ENCODE measurements at regions of chr4 and their contacts with region 1.

Region 1: DNA sequence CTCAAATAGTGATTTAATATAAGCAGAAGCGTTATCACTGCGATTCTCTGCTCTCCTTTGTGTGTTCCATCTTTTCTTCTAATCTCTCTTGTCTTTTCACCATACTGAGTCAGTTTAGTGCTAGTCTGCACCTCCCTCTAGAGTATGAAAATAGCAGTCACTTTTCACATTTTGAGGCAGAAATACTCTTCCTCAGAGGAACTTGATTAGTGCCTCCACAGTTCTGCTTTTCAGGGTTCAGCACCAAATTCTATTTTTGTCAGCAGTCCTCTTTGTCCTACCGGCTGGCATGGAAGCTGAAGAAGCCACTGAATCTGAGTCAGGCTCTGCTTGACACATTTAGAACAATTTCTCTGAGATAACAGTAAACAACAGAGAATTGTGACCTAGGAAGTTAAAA is 49.7 kb upstream of the ANKRD17 start:
- DNase-seq: no peak
- ATAC-seq: no peak
- H3K4me3 ChIP-seq: no peak overlapping the region
- H3K27ac ChIP-seq: no peak overlapping the region
- H3K4me1 ChIP-seq: no peaks in the 10 kb centered on the region
- H3K27me3 ChIP-seq: no peaks in the 10 kb centered on the region
- CTCF ChIP-seq: peak in 1 of 5 experiments; percentile 7
- POLR2A ChIP-seq: no peak

Region 2: DNA sequence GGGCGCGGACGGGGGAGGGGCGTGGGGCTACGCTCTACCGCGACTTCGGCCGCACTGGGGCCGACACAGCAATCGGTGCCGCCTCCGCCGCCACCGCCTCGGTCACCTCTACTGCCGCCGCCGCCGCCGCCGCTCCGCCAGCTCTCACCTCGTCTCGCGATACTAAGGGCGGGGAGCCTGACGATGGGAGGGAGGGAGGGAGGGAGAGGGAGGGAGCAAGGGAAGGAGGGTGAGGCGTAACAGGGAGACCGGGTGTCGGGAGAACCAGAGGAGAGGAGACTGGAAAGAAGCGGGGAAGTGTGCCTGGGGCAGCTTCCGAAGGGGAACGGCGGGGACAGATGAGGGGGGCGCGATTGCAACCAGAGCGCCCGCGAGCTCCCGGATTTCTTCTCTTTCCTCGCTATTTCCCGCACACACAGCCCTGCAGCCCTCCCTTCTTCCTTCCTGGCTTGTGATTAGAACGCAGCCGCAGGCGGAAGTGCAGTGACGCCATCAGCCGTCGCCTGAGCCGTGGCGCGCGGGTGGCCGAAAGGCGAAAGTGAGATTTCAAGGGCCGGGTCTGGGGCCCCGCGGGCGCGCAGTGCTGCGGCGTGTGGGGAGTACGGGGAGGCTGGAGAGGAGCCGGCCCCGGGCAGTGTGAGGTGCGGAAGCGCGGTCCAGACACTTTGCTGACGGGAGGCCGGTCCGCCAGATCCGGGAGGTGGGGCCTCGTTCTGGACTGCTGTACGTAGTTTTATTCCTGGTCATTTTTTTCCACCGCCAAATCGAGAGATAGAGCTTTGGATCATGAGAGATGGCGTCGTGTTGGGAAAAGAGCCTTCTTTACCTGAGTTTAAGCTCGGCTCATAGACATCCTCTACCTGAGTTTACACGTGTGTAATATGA is 49.4 kb before region 1 on chr4 and contains the start of gene ANKRD17:
- in situ Hi-C with region 1: no loop called
- intact Hi-C with region 1: no loop called
- DNase-seq: peak; percentile 83 to 90
- ATAC-seq: peak; percentile 82 to 87
- H3K4me3 ChIP-seq: peak within 1 kb of the TSS; percentile 80 to 93 (median 90)
- H3K27ac ChIP-seq: peak within 1 kb of the TSS; percentile 92 to 98 (median 96)
- H3K4me1 ChIP-seq: peaks cover 42 to 51% of the 10 kb centered on the region in 2 donors
- H3K27me3 ChIP-seq: no peaks in the 10 kb centered on the region
- CTCF ChIP-seq: peak; percentile 24 to 54 (median 27)
- POLR2A ChIP-seq: peak; percentile 76 to 77
- total RNA-seq, gene ANKRD17: 40.8 to 68.5 (median 54.8) TPM

Region 3: DNA sequence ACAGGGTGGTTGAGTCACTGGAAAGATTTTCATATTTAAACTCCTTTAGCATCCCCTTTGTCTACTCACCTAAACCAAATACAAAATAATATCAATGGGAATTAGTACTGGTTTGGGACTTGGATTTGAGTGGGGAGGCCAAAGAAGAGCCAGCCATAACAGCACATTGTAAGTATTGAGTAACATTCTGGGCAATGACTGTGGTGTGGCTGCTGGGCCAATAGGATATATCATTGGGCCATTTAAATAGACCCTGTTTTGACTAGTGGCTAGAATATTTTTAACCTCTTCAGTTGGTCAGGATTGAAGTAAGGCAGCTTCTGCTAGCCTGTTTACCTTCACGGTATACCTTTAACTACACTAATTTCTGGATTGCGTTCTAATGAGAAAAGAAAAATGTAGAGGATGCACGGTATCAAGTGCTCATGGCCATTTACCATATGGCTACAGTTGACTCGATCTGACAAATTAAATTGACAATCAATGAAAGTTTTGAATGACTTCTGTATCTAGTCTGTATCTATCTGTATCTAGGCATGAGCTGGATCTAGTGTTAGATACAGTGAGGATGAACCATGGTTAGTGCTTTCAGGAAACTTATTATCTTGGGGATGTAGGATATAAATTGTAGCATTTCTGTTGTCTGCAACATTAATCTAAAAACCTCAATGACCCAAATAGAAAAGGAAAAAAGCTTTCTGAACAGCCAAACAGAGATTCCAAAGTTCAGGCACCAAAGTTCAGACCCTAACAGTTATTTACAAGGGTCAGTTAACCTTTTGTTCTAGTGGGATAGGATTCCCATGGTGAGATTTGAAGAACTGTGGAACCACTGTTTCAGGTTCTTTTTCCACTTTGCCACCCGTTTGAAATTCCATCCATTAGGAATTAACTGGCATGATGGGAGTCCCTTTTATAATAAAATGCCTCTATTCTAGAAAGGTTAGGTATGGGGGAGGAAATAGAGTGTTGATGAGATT is 89.0 kb after region 1 on chr4:
- in situ Hi-C with region 1: no loop called
- intact Hi-C with region 1: no loop called
- DNase-seq: no peak
- ATAC-seq: no peak
- H3K4me3 ChIP-seq: no peak overlapping the region
- H3K27ac ChIP-seq: no peak overlapping the region
- H3K4me1 ChIP-seq: no peaks in the 10 kb centered on the region
- H3K27me3 ChIP-seq: no peaks in the 10 kb centered on the region
- CTCF ChIP-seq: no peak
- POLR2A ChIP-seq: no peak

Region 4: GRCh38 chr4:73573794-73574406 is 265.6 kb after region 1 on chr4:
- in situ Hi-C with region 1: no loop called
- intact Hi-C with region 1: no loop called
- DNase-seq: no peak
- ATAC-seq: no peak
- H3K4me3 ChIP-seq: no peak overlapping the region
- H3K27ac ChIP-seq: no peak overlapping the region
- H3K4me1 ChIP-seq: no peaks in the 10 kb centered on the region
- H3K27me3 ChIP-seq: no peaks in the 10 kb centered on the region
- CTCF ChIP-seq: peak in 3 of 5 experiments; percentile 32 to 49 (median 34)
- POLR2A ChIP-seq: no peak

Region 5: DNA sequence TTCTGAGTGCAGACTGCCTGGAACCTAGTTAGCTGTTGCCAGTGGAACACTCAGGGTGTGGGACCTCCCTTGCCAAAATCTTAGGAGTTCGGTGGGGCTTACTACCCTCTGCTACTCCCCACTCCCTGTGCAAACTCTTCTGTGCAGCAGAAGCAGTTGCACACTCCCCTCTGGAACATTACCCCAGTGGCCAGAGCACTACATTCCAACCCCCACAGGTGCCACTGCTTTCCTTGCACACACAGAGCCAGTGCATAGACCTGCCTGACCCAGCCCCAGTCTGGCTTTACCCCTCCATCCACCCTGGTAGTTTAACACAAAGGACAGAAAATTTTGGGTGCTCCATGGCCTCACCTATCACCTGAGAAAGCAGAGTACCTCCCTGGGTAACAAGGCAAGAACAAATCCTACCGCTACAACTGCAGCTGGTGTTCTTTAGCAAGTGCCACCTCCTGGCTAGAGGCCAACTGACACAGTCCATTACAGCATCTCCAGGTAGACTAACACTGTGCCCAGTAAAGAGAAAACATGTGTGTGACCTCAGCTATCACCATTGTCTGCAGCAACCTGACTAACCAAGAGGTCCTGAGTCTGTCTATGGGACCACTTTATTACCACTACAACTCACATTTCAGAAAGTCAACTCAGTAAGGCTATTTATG is 323.4 kb after region 1 on chr4:
- in situ Hi-C with region 1: loop called in 2 of 4 experiments (anchors 25 kb)
- intact Hi-C with region 1: no loop called
- DNase-seq: no peak
- ATAC-seq: no peak
- H3K4me3 ChIP-seq: no peak overlapping the region
- H3K27ac ChIP-seq: no peak overlapping the region
- H3K4me1 ChIP-seq: no peaks in the 10 kb centered on the region
- H3K27me3 ChIP-seq: no peaks in the 10 kb centered on the region
- CTCF ChIP-seq: no peak
- POLR2A ChIP-seq: no peak

Measured in gastrocnemius medialis (tissue), 4 donors.